Ovary (tissue), 10 donors: ENCODE measurements at regions of chr4 and their contacts with region 1.

Region 1: DNA sequence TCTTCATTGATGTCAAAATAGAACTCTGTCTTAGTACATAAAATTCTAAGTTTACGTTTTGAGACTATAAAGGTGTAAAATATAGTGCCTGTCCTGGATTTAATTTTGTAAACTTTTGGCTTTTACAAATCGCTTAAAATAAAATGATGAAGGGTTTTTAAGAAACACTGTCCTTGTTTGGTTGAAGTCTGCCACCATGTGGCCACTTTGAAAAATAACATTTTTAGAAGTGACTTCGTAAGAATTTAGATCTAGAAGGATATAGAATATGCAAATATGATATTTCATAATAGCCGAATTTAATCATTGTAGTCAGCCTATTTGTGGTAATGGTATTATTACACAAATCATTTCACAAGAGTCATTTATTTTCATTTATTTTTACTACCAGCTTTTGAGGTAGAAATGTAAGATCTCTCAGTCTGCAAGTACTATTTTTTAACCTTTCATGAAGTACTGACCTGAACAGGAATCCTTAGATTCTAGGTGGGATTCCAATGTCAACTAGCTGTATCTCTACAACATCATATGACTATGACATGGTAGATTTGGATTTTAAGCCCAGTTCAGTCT is 31.0 kb upstream of the FAT4 start:
- DNase-seq: no peak
- H3K4me3 ChIP-seq: no peak overlapping the region
- H3K27ac ChIP-seq: no peak overlapping the region
- H3K4me1 ChIP-seq: no peaks in the 10 kb centered on the region
- H3K27me3 ChIP-seq: no peaks in the 10 kb centered on the region
- CTCF ChIP-seq: peak in 2 of 3 donors; percentile 40 to 42
- EP300 ChIP-seq: no peak
- POLR2A ChIP-seq: no peak

Region 2: GRCh38 chr4:124334119-124334518 is 949.7 kb before region 1 on chr4:
- intact Hi-C with region 1: loop called in 3 of 4 experiments (anchors 10 kb)
- DNase-seq: peak in 1 of 5 donors; percentile 25
- H3K4me3 ChIP-seq: no peak overlapping the region
- H3K27ac ChIP-seq: no peak overlapping the region
- H3K4me1 ChIP-seq: peaks cover 2% of the 10 kb centered on the region
- H3K27me3 ChIP-seq: no peaks in the 10 kb centered on the region
- CTCF ChIP-seq: peak; percentile 11 to 30 (median 27)
- EP300 ChIP-seq: no peak
- POLR2A ChIP-seq: no peak

Region 3: GRCh38 chr4:125382995-125383394 is 99.2 kb after region 1 on chr4:
- intact Hi-C with region 1: no loop called
- DNase-seq: no peak
- H3K4me3 ChIP-seq: no peak overlapping the region
- H3K27ac ChIP-seq: no peak overlapping the region
- H3K4me1 ChIP-seq: peaks cover 2% of the 10 kb centered on the region
- H3K27me3 ChIP-seq: no peaks in the 10 kb centered on the region
- CTCF ChIP-seq: no peak
- EP300 ChIP-seq: no peak
- POLR2A ChIP-seq: no peak

Region 4: DNA sequence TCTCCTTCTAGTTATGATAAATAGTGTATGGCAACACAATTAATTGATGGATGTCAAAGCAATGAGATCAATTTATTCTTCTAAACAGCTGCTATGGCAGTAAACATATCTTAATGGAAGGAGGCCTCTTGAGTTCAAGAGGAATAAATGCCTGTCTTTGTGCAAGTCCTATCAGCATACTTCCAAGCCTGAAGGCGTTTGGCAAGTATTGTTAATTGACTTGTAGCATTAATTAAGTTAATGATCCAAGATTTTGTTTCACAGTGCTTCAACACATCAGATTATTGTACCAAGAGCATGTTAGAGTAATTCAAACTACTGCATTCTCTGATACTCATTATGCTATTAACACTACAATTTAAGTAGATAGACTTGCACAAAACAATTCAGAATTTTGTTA is 175.7 kb after region 1 on chr4:
- intact Hi-C with region 1: no loop called
- DNase-seq: no peak
- H3K4me3 ChIP-seq: no peak overlapping the region
- H3K27ac ChIP-seq: no peak overlapping the region
- H3K4me1 ChIP-seq: no peaks in the 10 kb centered on the region
- H3K27me3 ChIP-seq: no peaks in the 10 kb centered on the region
- CTCF ChIP-seq: no peak
- EP300 ChIP-seq: no peak
- POLR2A ChIP-seq: no peak